Right ventricle myocardium inferior (tissue), 1 donor: ENCODE measurements at regions of chr18 and their contacts with region 1.

Region 1: DNA sequence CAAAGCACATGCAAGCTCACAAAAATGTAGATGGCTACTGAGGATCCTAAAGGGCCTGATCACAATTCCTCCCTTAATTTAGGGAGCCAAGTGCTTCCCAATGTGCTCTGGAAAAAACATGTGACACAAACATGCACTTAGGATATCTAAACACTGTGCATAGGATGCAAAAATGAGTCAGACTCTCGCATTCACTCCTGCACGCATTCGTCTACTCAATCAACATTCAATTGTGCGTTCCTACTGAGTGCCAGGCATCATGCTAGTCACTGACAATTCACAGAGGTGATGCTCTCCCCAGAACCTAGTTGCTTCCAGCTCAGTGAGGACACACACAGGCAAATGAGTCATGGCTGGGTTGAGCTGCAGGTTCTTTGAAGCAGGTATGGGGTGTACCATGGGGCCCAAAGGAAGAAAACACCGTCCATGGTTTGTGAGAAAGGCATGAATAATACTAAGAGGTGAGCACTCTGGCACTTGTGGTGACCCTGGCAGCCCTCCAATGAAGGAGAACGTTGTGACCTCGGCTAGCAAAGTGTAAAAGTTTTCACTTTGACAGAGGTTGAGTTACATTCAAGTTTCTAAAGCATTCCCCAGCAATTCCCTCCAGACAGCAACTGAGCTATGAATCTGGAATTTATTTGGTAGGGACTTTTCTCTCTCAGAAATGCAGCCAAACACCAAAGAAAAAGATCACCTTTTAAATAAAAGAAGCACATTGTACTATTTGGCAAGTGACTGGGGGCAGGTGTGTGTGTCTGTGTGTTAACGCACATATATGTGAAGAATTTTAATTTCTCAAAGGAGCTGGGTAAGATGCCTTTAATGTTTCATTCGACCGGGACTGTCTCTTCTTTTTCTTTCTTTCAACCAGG is 173.3 kb downstream of the ALPK2 start:
- DNase-seq: no peak
- ATAC-seq: no peak

Region 2: DNA sequence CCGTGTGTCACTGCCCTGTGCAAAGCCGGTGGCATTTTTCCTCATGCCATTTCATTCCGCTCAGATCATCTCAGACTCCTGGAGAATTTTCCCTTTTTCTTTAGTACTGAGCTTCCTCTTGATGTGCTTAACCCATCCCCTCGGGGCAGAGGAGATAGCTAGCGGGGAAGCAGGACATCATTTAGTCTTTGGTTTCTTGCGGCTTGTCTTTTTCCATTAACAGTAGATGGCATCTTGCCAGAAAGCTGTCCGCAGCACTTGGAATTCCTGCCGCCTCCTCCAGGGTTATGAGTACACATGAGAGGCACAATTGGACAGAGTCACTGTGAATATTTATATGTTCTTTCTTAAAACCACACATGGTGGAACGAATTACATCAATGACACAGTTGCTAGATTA is 53.3 kb before region 1 on chr18:
- intact Hi-C with region 1: loop called (anchors 5 kb)
- DNase-seq: no peak
- ATAC-seq: peak; percentile 18